ENCODE measurements at regions of chr17 and their contacts with region 1.

Region 1: DNA sequence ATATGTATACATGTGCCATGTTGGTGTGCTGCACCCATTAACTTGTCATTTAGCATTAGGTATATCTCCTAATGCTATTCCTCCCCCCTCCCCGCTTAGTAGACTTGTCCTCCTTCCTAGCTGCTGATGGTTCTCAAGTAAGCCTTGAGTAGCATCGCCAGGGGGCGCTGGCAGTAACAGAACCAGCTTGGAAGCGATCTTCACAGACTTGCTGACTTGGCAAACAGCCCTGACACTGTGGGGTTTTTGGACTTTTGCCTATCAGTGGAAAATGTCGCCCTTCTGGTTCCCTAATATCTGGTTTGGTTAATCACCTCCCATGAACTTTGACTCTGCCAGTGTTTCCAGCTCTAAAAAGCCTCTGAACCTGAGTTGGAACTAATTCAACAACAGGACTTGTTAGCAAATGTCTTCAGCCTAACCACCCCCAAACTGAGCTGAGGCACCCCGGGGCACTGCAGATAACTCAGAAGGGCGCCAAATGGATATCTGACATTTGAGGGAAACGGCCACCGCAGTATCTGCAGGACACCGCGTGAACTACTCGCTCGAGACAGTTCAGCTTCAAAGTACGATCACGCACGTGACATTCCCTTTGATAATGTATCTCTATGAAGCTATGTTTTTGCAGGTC is 15.4 kb upstream of the SPATA32 start:
- DNase-seq: peak; percentile 95 to 98 (median 95)
- H3K4me3 ChIP-seq: no peak overlapping the region
- H3K27ac ChIP-seq: no peak overlapping the region
- H3K4me1 ChIP-seq: peaks cover 0 to 6% (median 6%) of the 10 kb centered on the region in 4 experiments
- H3K27me3 ChIP-seq: no peaks in the 10 kb centered on the region

Region 2: DNA sequence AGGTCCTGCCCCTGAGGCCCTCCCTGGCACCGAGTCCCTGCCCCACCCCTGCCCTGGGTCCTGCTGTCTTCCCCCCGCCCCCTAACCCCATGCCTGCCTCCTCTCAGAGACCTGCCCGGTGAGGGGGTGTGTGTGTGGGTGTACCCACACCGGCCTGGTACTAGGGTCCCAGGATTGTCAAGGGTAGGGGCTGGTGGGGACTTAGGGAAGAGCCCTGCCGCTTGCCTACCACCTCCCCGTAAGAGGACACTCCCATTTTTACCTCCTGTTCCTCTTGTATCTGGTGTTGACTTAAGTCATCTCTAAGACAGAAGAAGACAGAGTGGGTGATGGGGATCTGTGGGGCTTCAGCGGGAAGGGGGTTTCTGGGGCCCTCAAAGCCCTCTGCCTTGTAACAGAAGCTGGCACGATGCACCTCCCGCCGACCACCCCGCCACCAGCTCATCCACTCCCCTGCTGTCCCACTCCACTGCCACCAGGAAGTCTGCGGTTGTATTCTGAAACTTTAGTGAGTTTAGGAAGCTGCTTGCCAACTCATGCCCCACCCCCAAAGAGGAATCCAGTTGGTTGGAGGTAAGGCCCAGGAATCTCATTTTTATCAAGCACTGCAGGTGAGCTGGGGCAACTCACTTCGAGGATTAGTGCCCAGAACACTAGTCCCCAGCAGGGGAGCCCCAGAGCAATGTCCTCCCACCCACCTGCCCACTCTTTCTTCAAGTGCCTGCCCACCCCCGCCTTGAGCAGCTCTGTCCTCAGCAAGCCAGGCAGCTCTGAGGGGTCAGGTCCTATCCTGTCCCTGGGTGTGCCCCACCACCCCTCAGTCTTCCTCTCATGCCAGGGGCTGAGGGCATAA is 21.0 kb before region 1 on chr17:
- CTCF ChIA-PET with region 1: interaction called, 13 read pairs
- POLR2A ChIA-PET with region 1: no interaction called
- DNase-seq: peak; percentile 15 to 60 (median 28)
- H3K4me3 ChIP-seq: peak overlapping the region in 3 of 7 experiments; percentile 23 to 26 (median 24)
- H3K27ac ChIP-seq: no peak overlapping the region
- H3K4me1 ChIP-seq: peaks cover 2 to 25% (median 17%) of the 10 kb centered on the region in 4 experiments
- H3K27me3 ChIP-seq: no peaks in the 10 kb centered on the region

Region 3: DNA sequence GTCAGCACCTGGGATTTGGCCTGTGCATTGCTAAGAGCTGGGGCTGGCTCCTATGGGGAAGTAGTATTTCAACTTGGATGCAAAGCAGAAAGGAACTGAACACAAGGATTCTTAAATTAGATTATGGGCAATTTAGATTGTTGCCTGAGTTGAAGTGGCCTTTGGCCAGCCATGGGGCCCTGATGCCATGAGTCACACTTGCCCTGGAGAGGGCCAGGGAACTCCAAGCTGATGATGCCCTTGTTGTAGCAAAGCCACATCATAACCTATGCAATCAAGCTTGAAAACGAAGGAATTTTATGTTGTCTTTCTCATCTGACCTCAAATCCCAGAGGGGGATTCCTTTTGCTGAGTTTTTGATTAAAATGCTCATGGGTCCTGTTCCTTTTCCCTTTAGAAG is 11.5 kb before region 1 on chr17:
- CTCF ChIA-PET with region 1: interaction called, 25 read pairs
- POLR2A ChIA-PET with region 1: no interaction called
- DNase-seq: no peak
- H3K4me3 ChIP-seq: no peak overlapping the region
- H3K27ac ChIP-seq: no peak overlapping the region
- H3K4me1 ChIP-seq: peaks cover 4 to 19% (median 14%) of the 10 kb centered on the region in 4 experiments
- H3K27me3 ChIP-seq: no peaks in the 10 kb centered on the region

Region 4: DNA sequence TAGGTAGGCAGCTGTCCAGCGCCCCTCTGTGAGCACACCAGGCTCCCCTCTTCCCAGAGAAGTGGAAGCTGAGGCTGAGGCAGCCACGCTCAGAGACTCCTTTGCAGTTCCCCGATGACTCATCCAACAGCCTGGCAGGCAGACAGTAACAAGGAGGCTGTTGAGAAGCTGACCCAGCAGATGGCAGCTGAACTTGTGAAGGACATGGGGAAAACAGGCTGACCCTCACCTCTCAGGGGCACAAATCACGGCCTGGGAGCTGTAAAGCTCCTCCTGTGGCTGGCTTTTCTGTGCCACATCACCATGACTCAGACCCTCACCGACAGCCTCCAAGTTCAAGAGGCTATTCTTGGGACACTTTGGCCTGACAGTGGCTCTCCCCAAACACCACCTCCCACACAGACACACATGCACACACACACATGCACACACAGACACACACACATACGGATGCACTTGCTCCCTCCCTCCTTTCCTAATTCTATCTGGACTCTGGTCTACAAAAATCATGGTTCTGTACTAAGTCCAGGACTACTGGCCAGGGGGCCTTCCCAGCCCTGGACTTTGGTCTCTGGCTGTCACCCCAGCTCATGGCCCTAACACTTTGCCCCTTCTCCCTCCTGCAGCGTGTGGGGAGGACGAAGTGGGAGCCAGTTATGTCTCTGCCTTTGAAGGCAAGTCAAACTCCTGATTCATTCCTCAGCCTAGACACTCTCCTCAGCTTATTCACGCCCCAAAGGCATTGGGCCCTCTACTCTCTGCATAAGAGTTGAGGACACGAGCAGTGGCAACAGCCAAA is 16.3 kb after region 1 on chr17:
- CTCF ChIA-PET with region 1: interaction called, 20 read pairs
- POLR2A ChIA-PET with region 1: no interaction called
- DNase-seq: peak in 2 of 3 donors; percentile 42 to 59
- H3K4me3 ChIP-seq: no peak overlapping the region
- H3K27ac ChIP-seq: no peak overlapping the region
- H3K4me1 ChIP-seq: peaks cover 17 to 82% (median 55%) of the 10 kb centered on the region in 4 experiments
- H3K27me3 ChIP-seq: no peaks in the 10 kb centered on the region

Region 5: GRCh38 chr17:45317112-45317928 is 40.0 kb after region 1 on chr17:
- CTCF ChIA-PET with region 1: interaction called, 75 read pairs
- POLR2A ChIA-PET with region 1: interaction called, 3 read pairs
- DNase-seq: peak; percentile 100
- H3K4me3 ChIP-seq: peak overlapping the region; percentile 40 to 88 (median 83)
- H3K27ac ChIP-seq: peak overlapping the region; percentile 17 to 84
- H3K4me1 ChIP-seq: peaks cover 39 to 70% (median 67%) of the 10 kb centered on the region in 4 experiments
- H3K27me3 ChIP-seq: no peaks in the 10 kb centered on the region

Region 6: DNA sequence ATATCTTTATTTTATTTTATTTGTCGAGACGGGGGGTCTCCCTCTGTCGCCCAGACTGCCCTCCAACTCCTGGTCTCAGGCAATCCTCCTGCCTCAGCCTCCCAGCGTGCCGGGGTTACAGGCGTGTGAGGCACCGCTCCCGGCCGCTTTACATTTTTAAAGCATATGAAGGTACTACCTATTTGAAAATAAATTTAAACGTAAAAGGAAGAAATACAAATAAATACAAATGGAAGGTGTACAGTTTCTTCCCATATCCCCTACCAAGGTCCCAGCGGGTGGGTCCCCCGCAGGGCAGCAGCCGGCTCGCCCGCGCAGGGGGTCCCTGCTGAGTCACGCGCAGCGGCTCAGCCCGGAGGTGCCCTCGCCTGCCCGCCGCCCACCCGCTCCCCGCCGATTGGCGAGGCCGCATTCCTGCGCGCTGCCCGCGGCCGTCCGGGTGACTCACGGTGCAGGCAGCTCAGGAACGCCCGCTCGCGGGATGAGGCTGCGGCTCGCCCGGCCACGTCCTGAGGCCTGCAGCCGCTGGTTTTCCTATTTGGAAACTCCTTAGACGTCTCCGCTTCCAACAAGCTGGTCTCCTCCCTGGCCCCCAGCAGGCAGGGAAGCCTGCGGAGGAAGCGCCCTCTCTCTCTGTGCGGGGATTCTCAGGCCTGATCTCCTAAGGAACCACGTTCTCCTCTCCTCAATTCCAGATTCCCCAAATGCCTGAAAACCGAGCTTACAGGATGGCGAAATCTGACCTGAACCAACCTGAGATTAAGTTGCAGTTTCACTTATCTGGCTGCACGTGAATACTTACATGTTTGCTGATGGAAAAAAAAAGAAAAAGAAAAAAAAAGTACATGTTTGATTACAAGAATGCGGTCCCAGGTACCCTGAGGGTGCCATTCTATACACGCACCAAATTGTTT is 94.3 kb after region 1 on chr17:
- CTCF ChIA-PET with region 1: interaction called, 11 read pairs
- POLR2A ChIA-PET with region 1: no interaction called
- DNase-seq: peak; percentile 51 to 80 (median 67)
- H3K4me3 ChIP-seq: peak overlapping the region in 5 of 7 experiments; percentile 13 to 71 (median 53)
- H3K27ac ChIP-seq: no peak overlapping the region
- H3K4me1 ChIP-seq: peaks cover 0 to 18% (median 16%) of the 10 kb centered on the region in 4 experiments
- H3K27me3 ChIP-seq: no peaks in the 10 kb centered on the region

Measured in common myeloid progenitor, CD34-positive (primary cell).